H1 (cell line): ENCODE measurements at regions of chr14 and their contacts with region 1.

Region 1: GRCh38 chr14:97185186-97185585 is 388.0 kb downstream of the VRK1 start:
- DNase-seq: peak in 1 of 2 experiments; percentile 51
- H3K4me3 ChIP-seq: no peak overlapping the region
- H3K27ac ChIP-seq: no peak overlapping the region
- H3K4me1 ChIP-seq: no peaks in the 10 kb centered on the region
- H3K27me3 ChIP-seq: no peaks in the 10 kb centered on the region
- CTCF ChIP-seq: peak; percentile 49 to 64 (median 57)
- EP300 ChIP-seq: no peak
- POLR2A ChIP-seq: no peak
- RAD21 ChIP-seq: peak; percentile 70 to 78

Region 2: GRCh38 chr14:97299661-97300060 is 114.5 kb after region 1 on chr14:
- CTCF ChIA-PET with region 1: interaction called, 13 read pairs
- POLR2A ChIA-PET with region 1: no interaction called
- DNase-seq: no peak
- H3K4me3 ChIP-seq: no peak overlapping the region
- H3K27ac ChIP-seq: no peak overlapping the region
- H3K4me1 ChIP-seq: peaks cover 0 to 2% (median 0%) of the 10 kb centered on the region in 4 experiments; a peak in 1 of 7 replicates
- H3K27me3 ChIP-seq: no peaks in the 10 kb centered on the region
- CTCF ChIP-seq: peak; percentile 67 to 77 (median 73)
- EP300 ChIP-seq: no peak
- POLR2A ChIP-seq: no peak
- RAD21 ChIP-seq: peak; percentile 79 to 88